ENCODE measurements at regions of chr5 and their contacts with region 1.

Region 1: GRCh38 chr5:58394339-58394738 is 65.5 kb downstream of the PLK2 start:
- DNase-seq: no peak
- H3K4me3 ChIP-seq: no peak overlapping the region
- H3K27ac ChIP-seq: no peak overlapping the region
- H3K4me1 ChIP-seq: no peaks in the 10 kb centered on the region
- H3K27me3 ChIP-seq: no peaks in the 10 kb centered on the region
- CTCF ChIP-seq: no peak

Region 2: DNA sequence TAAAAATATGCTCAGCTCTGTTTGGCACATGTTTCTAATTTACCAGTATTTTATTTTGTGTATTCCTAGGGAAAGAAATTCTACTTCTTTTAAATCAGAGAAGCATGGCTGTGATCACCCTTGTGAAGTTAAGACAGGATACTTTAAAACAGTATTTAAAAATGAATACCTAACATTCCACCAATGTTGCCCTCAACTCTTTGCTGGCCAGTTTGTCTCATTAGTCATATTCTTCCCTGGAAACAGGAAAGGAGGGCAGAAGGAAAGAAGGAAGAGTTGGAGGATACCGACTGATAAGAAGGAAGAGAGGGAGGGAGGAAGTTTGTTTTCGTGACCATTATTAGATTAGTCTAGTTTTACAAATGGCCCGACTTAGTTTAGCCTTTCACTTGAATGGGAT is 71.9 kb before region 1 on chr5:
- CTCF ChIA-PET with region 1: no interaction called
- POLR2A ChIA-PET with region 1: interaction called, 14 read pairs
- intact Hi-C with region 1: no loop called
- DNase-seq: no peak
- H3K4me3 ChIP-seq: no peak overlapping the region
- H3K27ac ChIP-seq: no peak overlapping the region
- H3K4me1 ChIP-seq: no peaks in the 10 kb centered on the region
- H3K27me3 ChIP-seq: no peaks in the 10 kb centered on the region
- CTCF ChIP-seq: no peak

Region 3: DNA sequence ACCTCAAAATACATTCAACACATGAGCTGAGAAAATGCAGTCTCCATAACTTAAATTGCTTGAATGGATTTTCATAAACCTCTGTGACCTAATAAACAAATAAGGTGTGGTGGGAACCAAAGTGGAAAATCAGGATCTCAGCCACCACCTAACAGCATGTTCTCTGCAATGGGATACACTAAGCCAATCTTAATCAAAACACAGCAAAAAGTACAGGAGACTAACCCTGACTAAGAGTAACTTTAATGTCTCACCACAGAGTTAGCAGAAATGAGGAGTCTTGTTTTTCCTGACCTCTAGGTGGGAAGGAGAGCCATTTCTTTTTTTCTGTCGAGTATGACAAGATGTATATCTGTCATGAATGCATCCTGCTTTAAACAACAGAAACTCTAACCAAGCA is 17.0 kb after region 1 on chr5:
- CTCF ChIA-PET with region 1: no interaction called
- POLR2A ChIA-PET with region 1: no interaction called
- intact Hi-C with region 1: no loop called
- DNase-seq: peak in 1 of 2 experiments; percentile 88
- H3K4me3 ChIP-seq: no peak overlapping the region
- H3K27ac ChIP-seq: peak overlapping the region; percentile 87
- H3K4me1 ChIP-seq: peaks cover 57% of the 10 kb centered on the region
- H3K27me3 ChIP-seq: no peaks in the 10 kb centered on the region
- CTCF ChIP-seq: no peak

Region 4: DNA sequence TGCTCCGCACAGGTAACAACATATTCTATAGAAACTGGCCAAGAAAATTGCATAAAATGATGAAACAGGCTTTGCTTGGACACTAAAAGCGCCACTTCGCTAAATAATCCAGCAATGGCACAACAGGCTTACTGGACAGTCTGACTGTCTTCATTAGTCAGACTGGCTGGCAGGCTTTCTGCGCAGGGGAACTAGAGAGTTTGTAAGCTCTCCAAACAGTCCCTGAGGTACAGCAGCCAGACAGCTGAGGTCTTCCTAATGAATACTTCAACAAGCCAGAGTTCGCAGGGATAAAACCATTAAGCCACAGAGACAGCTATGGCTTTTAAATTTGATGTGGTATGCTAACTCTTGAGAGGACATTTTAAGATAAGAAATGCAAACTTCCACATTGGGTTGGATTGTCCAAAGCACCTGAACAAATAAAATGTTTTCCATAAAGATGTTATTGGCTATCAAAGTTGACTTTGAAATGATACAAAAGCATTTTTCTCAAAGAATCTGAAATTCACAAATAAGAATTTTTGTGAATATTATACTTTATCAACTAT is 44.8 kb after region 1 on chr5:
- CTCF ChIA-PET with region 1: no interaction called
- POLR2A ChIA-PET with region 1: no interaction called
- intact Hi-C with region 1: no loop called
- DNase-seq: no peak
- H3K4me3 ChIP-seq: no peak overlapping the region
- H3K27ac ChIP-seq: no peak overlapping the region
- H3K4me1 ChIP-seq: no peaks in the 10 kb centered on the region
- H3K27me3 ChIP-seq: no peaks in the 10 kb centered on the region
- CTCF ChIP-seq: no peak

Measured in PC-9 (cell line).